AG04449 (cell line): ENCODE measurements at regions of chr4 and their contacts with region 1.

Region 1: DNA sequence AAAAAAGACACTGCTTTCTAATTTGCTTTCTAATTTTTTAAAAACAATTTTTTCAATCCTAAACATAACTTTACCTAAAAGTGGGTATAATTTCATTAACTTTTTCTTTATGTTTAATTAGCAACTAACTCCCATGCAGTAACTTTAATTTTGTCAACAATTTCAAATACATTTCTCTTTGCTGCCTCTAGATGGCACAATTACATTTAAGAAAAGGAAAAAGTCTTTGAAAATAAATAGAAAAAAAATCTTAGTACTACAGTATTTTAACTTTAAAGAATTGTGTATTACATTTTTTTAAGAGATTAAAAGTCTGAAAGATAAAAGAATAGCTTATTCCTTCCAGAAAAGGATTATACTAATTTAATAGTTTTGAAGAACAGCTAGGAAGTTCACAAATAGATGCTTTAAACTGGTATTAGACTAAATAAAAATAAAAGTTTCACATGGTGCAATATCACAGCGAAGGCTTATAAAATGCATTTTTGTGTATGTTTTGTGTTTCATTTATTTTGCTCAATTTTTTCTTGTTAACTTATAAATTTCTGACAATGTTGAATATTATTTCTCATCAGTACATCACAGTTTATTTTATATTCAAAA is 105.1 kb downstream of the ADGRA3 start:
- DNase-seq: no peak
- H3K4me3 ChIP-seq: no peak overlapping the region
- CTCF ChIP-seq: peak; percentile 19

Region 2: GRCh38 chr4:22434895-22435294 is 24.1 kb after region 1 on chr4:
- CTCF ChIA-PET with region 1: interaction called, 10 read pairs
- POLR2A ChIA-PET with region 1: no interaction called
- DNase-seq: no peak
- H3K4me3 ChIP-seq: no peak overlapping the region
- CTCF ChIP-seq: peak; percentile 62

Region 3: GRCh38 chr4:22607382-22607781 is 196.6 kb after region 1 on chr4:
- CTCF ChIA-PET with region 1: interaction called, 34 read pairs
- POLR2A ChIA-PET with region 1: no interaction called
- DNase-seq: no peak
- H3K4me3 ChIP-seq: no peak overlapping the region
- CTCF ChIP-seq: peak; percentile 72

Region 4: GRCh38 chr4:22688236-22688635 is 277.5 kb after region 1 on chr4:
- CTCF ChIA-PET with region 1: interaction called, 53 read pairs
- POLR2A ChIA-PET with region 1: no interaction called
- DNase-seq: no peak
- H3K4me3 ChIP-seq: no peak overlapping the region
- CTCF ChIP-seq: no peak